ENCODE measurements at regions of chr5 and their contacts with region 1.

Region 1: GRCh38 chr5:102498271-102499034 is at the start of gene SLCO6A1:
- DNase-seq: no peak
- total RNA-seq, gene SLCO6A1: not detected

Region 2: DNA sequence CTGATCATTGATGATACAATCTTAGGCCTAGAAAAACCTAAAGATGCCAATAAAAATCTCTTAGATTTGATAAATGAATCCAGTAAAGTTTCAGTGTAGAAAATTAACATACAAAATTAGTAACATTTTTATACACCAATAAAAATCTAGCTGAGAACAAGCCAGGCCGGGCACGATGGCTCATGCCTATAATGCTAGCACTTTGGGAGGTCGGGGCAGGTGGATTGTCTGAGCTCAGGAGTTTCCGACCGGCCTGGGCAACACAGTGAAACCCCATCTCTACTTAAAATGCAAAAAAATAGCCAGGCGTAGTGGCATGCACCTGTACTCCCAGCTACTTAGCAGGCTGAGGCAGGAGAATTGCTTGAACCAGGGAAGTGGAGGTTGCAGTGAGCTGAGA is 84.0 kb before region 1 on chr5:
- intact Hi-C with region 1: no loop called
- DNase-seq: no peak

Region 3: DNA sequence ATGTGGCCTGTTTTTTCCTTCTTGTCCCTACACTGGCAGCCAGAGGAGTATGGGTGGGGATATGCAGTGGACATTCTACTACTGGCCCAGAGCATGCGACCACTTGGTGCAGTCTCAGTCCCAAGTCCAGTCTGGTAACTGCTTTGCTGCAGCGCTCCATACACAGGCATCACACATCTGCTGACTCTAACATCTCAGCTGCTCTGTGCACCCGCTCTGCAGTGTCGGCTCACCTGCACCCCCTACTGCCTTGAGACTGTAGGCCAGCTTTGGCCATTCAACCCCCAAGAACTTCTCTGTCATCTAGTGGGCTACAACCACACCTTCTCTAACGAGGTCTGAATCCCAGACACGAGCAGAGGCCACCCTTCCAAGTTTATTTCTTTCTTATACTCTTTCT is 46.7 kb after region 1 on chr5:
- intact Hi-C with region 1: no loop called
- DNase-seq: no peak

Region 4: GRCh38 chr5:102722930-102723329 is 224.5 kb after region 1 on chr5:
- intact Hi-C with region 1: loop called in 1 of 2 experiments (anchors 5 kb)
- DNase-seq: no peak

Measured in posterior vena cava (tissue), 2 donors.